ENCODE measurements at regions of chr7 and their contacts with region 1.

Region 1: DNA sequence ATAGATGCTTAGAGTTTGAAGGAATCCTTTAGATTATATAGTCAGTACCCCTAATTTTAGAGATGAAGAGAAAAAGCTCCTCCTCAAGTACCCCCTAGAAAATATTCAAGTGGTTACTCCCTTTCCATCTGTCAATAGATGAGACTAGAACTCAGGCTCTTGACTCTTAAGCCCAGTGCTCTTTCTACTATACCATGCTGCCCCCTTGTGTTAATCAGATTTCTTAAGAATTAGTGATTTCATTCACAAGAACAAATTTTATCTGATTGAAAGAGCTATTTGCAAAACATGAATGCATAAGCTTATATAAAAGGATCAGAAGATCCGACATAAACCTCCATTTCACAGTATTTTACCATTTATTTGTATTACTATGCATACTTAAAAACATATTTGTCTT is 179.3 kb downstream of the TFEC start:
- DNase-seq: no peak
- H3K4me3 Mint-ChIP-seq: no peak overlapping the region
- H3K27ac Mint-ChIP-seq: no peak overlapping the region
- H3K4me1 Mint-ChIP-seq: no peaks in the 10 kb centered on the region
- H3K27me3 Mint-ChIP-seq: no peaks in the 10 kb centered on the region

Region 2: GRCh38 chr7:115369008-115369407 is 482.3 kb before region 1 on chr7:
- CTCF ChIA-PET with region 1: no interaction called
- intact Hi-C with region 1: loop called (anchors 10 kb)
- DNase-seq: no peak
- H3K4me3 Mint-ChIP-seq: no peak overlapping the region
- H3K27ac Mint-ChIP-seq: no peak overlapping the region
- H3K4me1 Mint-ChIP-seq: no peaks in the 10 kb centered on the region
- H3K27me3 Mint-ChIP-seq: no peaks in the 10 kb centered on the region

Region 3: GRCh38 chr7:116122972-116123595 is 271.8 kb after region 1 on chr7:
- CTCF ChIA-PET with region 1: no interaction called
- intact Hi-C with region 1: loop called (anchors 5 kb)
- DNase-seq: peak; percentile 6
- H3K4me3 Mint-ChIP-seq: no peak overlapping the region
- H3K27ac Mint-ChIP-seq: no peak overlapping the region
- H3K4me1 Mint-ChIP-seq: no peaks in the 10 kb centered on the region
- H3K27me3 Mint-ChIP-seq: peaks cover 14% of the 10 kb centered on the region